PC-3 (cell line): ENCODE measurements at regions of chr4 and their contacts with region 1.

Region 1: GRCh38 chr4:80266253-80266901 is at the start of gene FGF5:
- DNase-seq: peak; percentile 76
- ATAC-seq: peak; percentile 81
- H3K4me3 ChIP-seq: peak within 1 kb of the TSS; percentile 88
- H3K27ac ChIP-seq: peak within 1 kb of the TSS; percentile 49
- H3K4me1 ChIP-seq: peaks cover 14% of the 10 kb centered on the region; the same call in 1 of the 2 replicates
- H3K27me3 ChIP-seq: no peaks in the 10 kb centered on the region
- CTCF ChIP-seq: no peak
- total RNA-seq, gene FGF5: 0.75 and 2.6 TPM in 2 replicates

Region 2: DNA sequence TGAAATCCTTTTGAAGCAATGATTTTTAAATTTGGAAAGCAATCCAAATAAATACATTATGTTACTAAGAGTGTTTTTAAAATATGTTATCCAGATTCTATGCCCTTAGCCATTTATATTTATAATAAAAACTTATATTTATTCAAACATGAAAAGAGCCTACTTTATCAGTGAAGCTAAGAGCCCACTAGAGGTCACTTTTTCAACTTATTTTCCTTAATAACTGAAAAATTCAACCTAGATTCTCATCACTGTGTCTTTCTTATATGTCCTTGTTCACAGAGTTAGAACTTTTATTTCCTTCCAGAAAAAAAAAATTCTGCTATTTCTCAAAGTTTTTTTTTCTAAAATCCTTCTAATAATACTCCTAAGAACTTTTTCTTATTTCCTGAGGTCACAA is 45.2 kb before region 1 on chr4:
- CTCF ChIA-PET with region 1: no interaction called
- POLR2A ChIA-PET with region 1: no interaction called
- intact Hi-C with region 1: loop called (anchors 5 kb)
- DNase-seq: peak; percentile 55
- ATAC-seq: no peak
- H3K4me3 ChIP-seq: no peak overlapping the region
- H3K27ac ChIP-seq: no peak overlapping the region
- H3K4me1 ChIP-seq: peaks cover 25% of the 10 kb centered on the region
- H3K27me3 ChIP-seq: no peaks in the 10 kb centered on the region
- CTCF ChIP-seq: peak; percentile 45

Region 3: GRCh38 chr4:80307774-80308465 is 41.5 kb after region 1 on chr4:
- CTCF ChIA-PET with region 1: no interaction called
- POLR2A ChIA-PET with region 1: no interaction called
- intact Hi-C with region 1: loop called (anchors 5 kb)
- DNase-seq: peak; percentile 59
- ATAC-seq: peak; percentile 59
- H3K4me3 ChIP-seq: peak overlapping the region; percentile 44; the same call in 1 of the 2 replicates
- H3K27ac ChIP-seq: peak overlapping the region; percentile 76
- H3K4me1 ChIP-seq: peaks cover 55% of the 10 kb centered on the region
- H3K27me3 ChIP-seq: no peaks in the 10 kb centered on the region
- CTCF ChIP-seq: no peak

Region 4: DNA sequence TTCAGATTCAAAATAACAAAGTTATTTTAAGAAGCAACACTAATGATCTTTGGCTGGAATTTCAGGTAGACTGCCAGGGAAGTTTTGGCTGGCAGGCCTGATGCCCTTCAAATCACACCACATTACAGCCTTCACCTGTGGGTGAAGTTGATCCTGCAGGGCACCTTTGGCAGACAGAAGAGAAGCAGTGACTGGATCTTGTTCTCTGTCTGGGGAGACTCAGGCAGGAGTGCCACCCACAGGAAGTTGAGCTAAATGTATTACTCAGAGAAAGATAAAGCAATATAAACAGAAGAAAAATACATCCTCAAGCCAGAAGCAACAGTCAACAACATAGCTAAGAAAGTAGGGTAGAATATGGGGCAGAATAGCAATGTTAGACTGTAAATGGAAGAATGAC is 56.3 kb after region 1 on chr4:
- CTCF ChIA-PET with region 1: interaction called, 7 read pairs
- POLR2A ChIA-PET with region 1: no interaction called
- intact Hi-C with region 1: loop called (anchors 2 kb)
- DNase-seq: peak; percentile 68
- ATAC-seq: peak; percentile 99
- H3K4me3 ChIP-seq: no peak overlapping the region
- H3K27ac ChIP-seq: no peak overlapping the region
- H3K4me1 ChIP-seq: peaks cover 13% of the 10 kb centered on the region
- H3K27me3 ChIP-seq: no peaks in the 10 kb centered on the region
- CTCF ChIP-seq: peak; percentile 63